ENCODE measurements at regions of chr13 and their contacts with region 1.

Region 1: DNA sequence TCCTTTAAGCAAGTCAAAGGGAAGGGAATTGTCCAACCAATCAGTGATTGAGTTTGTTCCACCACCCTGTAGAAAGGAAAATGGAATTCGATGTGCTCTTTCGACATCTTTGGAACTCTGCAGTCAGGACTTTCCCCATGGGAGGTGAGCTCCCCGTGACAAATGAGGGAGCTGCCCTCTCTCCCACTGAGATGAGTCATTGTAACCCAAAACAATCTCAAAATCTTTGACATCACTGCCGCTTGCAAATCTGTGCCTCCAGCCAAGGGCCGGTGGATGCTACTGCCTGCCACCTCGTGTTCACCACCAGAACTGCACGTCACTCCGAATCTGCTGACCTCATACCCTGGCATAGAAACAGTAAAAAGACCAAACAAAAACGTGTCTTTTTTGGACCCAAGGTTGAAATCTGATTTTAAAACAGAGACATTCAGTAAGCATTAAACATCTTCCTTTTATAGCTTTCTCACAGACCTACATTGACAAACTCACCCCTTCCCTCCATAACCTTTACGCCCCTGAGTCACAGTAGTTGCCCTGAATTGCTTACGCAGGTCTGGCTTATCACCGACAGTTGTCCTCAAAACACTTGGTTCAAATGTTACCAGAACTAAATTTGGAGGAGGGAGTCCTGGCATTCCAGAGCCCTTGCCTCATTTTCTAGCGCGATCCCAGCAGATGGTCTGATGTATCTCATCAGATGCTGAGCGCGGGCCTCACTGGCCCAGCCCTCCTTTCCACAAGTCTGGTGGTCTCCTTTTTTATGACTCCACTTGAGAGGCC is 105.2 kb downstream of the COL4A2 start:
- DNase-seq: peak; percentile 88
- H3K4me3 Mint-ChIP-seq: no peak overlapping the region
- H3K27ac Mint-ChIP-seq: no peak overlapping the region
- H3K4me1 Mint-ChIP-seq: peaks cover 7% of the 10 kb centered on the region
- H3K27me3 Mint-ChIP-seq: peaks cover 73% of the 10 kb centered on the region

Region 2: DNA sequence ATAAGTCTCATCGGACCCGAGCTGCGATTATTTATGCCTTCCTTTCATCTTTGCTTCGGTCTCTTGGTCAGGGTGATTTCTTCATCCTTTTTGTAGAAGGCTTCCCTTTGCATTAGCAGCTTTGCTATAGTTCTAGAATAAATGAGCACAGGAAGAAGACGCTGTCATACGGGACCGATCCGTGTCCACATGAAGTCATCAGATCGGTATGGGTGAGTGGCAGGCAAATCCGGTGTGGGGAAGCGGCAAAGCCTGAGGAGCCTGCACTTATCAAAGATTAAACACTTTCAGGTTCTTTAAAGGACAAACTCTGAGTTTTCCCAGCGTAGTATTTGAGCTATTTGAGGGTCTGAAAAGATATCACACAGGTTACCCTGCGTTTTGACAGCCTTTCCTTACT is 745.3 kb before region 1 on chr13:
- CTCF ChIA-PET with region 1: no interaction called
- intact Hi-C with region 1: no loop called
- DNase-seq: no peak
- H3K4me3 Mint-ChIP-seq: no peak overlapping the region
- H3K27ac Mint-ChIP-seq: no peak overlapping the region
- H3K4me1 Mint-ChIP-seq: no peaks in the 10 kb centered on the region
- H3K27me3 Mint-ChIP-seq: peaks cover 2% of the 10 kb centered on the region

Region 3: GRCh38 chr13:110138010-110138699 is 274.2 kb before region 1 on chr13:
- CTCF ChIA-PET with region 1: no interaction called
- intact Hi-C with region 1: loop called (anchors 2 kb)
- DNase-seq: peak; percentile 85
- H3K4me3 Mint-ChIP-seq: peak overlapping the region; percentile 73
- H3K27ac Mint-ChIP-seq: peak overlapping the region; percentile 59
- H3K4me1 Mint-ChIP-seq: peaks cover 9% of the 10 kb centered on the region
- H3K27me3 Mint-ChIP-seq: peaks cover 41% of the 10 kb centered on the region

Region 4: GRCh38 chr13:110225609-110226562 is 186.4 kb before region 1 on chr13:
- CTCF ChIA-PET with region 1: interaction called, 33 read pairs
- intact Hi-C with region 1: loop called (anchors 1 kb)
- DNase-seq: no peak
- H3K4me3 Mint-ChIP-seq: no peak overlapping the region
- H3K27ac Mint-ChIP-seq: no peak overlapping the region
- H3K4me1 Mint-ChIP-seq: no peaks in the 10 kb centered on the region
- H3K27me3 Mint-ChIP-seq: peaks cover 16% of the 10 kb centered on the region

Region 5: GRCh38 chr13:110274687-110275086 is 137.6 kb before region 1 on chr13:
- CTCF ChIA-PET with region 1: no interaction called
- intact Hi-C with region 1: loop called (anchors 2 kb)
- DNase-seq: peak; percentile 8
- H3K4me3 Mint-ChIP-seq: no peak overlapping the region
- H3K27ac Mint-ChIP-seq: no peak overlapping the region
- H3K4me1 Mint-ChIP-seq: peaks cover 2% of the 10 kb centered on the region
- H3K27me3 Mint-ChIP-seq: peaks cover 7% of the 10 kb centered on the region

Region 6: GRCh38 chr13:110387391-110388107 is 24.8 kb before region 1 on chr13:
- CTCF ChIA-PET with region 1: interaction called, 9 read pairs
- intact Hi-C with region 1: loop called (anchors 1 kb)
- DNase-seq: peak; percentile 69
- H3K4me3 Mint-ChIP-seq: peak overlapping the region; percentile 32
- H3K27ac Mint-ChIP-seq: no peak overlapping the region
- H3K4me1 Mint-ChIP-seq: peaks cover 12% of the 10 kb centered on the region
- H3K27me3 Mint-ChIP-seq: peaks cover 50% of the 10 kb centered on the region

Region 7: DNA sequence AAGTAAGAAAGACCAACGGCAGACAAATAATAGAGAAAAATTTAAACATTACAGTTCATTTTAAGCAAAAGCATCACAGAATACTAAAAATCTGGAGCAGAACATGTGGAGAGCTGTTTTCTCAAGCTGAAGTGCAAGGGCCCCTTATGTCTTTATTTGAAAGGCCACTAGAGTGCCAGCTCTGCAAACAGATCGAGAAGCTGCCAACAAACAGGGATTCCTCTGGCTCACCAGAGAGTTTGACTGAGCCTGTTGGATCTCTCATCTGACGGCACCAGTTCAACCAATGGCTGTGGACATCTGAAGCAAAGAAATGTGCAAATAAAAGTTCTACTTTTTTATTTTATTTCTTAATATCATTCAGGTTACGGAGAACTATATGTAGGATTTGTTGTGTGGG is 14.4 kb after region 1 on chr13:
- CTCF ChIA-PET with region 1: no interaction called
- intact Hi-C with region 1: no loop called
- DNase-seq: no peak
- H3K4me3 Mint-ChIP-seq: no peak overlapping the region
- H3K27ac Mint-ChIP-seq: no peak overlapping the region
- H3K4me1 Mint-ChIP-seq: peaks cover 13% of the 10 kb centered on the region
- H3K27me3 Mint-ChIP-seq: peaks cover 72% of the 10 kb centered on the region

Region 8: DNA sequence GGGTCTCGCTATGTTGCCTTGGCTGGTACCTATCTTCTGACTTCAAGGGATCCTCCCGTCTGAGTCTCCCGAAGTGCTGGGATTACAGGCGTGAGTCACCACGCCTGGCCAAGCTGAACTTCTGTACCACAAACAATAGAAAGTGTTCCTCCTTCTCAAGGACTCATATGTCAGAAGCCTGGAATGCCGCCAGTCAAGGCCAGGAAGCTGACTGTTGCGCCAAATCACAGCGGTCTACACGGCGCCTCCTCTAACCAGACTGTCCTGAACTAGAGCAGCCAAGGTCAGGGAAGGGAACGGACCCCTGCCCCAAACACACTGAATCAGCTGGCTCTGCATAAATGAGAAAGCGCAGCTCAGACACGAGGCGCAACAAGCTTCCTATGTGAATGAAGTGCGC is 134.6 kb after region 1 on chr13:
- CTCF ChIA-PET with region 1: no interaction called
- intact Hi-C with region 1: no loop called
- DNase-seq: no peak
- H3K4me3 Mint-ChIP-seq: no peak overlapping the region
- H3K27ac Mint-ChIP-seq: no peak overlapping the region
- H3K4me1 Mint-ChIP-seq: no peaks in the 10 kb centered on the region
- H3K27me3 Mint-ChIP-seq: no peaks in the 10 kb centered on the region

Measured in activated naive CD4-positive, alpha-beta T cell treated with anti-CD3 and anti-CD28 coated beads for 36 hours (primary cell).